ENCODE measurements at regions of chr11 and their contacts with region 1.

Region 1: DNA sequence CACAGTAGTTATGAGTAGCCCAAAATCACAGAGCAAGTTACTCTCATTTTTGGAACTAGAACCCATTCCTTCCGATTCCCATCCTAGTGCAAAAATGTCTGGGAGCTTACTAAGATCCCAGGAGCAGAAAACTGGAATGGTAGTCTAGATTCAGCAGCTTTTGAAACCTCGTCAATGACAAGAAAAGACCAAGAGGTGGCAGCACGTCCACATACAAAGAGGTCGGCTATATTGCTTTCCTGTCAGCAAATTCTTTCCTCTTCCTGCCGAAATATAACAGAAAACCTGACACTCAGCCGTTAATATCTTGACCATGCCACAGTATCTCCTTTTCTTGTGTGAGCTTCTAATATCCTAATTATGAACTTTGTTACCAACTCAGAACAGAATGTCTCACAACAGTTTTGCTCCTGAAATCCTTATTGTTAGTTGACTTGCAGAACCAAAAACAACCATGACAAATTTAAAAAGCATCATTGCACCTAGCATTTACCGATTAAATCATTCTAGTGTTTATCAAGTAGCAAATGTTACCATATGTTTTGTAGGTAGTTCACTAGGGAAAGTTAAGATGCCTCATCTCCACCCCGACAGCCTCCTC is 92.8 kb upstream of the OR9G4 start:
- DNase-seq: peak; percentile 82
- ATAC-seq: peak; percentile 65
- H3K4me3 ChIP-seq: no peak overlapping the region
- H3K27ac ChIP-seq: no peak overlapping the region
- H3K4me1 ChIP-seq: no peaks in the 10 kb centered on the region
- H3K27me3 ChIP-seq: peaks cover 33% of the 10 kb centered on the region
- CTCF ChIP-seq: peak; percentile 92

Region 2: DNA sequence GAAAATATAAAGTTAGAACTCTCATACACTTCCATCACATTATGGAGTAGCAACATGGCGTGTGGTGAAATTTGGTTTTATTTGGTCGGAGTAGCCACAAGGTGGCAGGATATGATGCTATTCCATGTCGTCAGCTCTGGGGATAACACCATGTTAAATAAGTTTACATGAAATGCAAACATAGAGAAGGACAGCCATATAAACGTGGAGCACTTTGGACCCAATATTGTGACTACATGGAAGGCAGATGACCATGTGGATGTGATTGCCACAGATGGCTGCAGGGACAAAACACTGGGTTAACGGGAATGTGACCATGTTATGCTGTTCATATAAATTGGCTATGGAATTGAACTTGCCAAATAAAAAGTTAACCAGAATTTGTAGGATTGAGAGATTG is 319.3 kb before region 1 on chr11:
- CTCF ChIA-PET with region 1: no interaction called
- POLR2A ChIA-PET with region 1: no interaction called
- intact Hi-C with region 1: no loop called
- DNase-seq: peak; percentile 43
- ATAC-seq: no peak
- H3K4me3 ChIP-seq: no peak overlapping the region
- H3K27ac ChIP-seq: no peak overlapping the region
- H3K4me1 ChIP-seq: no peaks in the 10 kb centered on the region
- H3K27me3 ChIP-seq: no peaks in the 10 kb centered on the region
- CTCF ChIP-seq: peak; percentile 49; the same call in 1 of the 2 replicates

Region 3: DNA sequence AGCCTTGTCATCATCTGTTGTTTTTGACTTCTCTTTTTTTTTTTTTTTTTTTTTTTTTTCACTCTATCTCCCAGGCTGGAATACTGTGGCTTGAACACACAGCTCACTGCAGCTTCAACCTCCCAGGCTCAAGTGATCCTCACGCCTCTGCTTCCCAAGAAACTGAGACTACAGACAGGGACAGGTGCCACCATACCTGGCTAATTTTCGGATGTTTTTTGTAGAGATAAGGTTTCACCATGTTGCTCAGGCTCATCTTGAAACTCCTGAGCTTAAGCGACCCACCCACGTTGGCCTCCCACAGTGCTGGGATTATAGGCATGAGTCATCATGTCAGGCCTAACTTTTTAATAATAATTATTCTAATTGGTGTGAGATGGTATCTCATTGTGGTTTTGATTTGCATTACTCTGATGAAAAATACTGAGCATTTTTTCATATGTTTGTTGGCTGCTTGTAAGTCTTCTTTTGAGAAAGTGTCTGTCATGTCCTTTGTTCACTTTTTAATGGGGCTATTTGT is 41.6 kb before region 1 on chr11:
- CTCF ChIA-PET with region 1: no interaction called
- POLR2A ChIA-PET with region 1: no interaction called
- intact Hi-C with region 1: no loop called
- DNase-seq: no peak
- ATAC-seq: no peak
- H3K4me3 ChIP-seq: no peak overlapping the region
- H3K27ac ChIP-seq: no peak overlapping the region
- H3K4me1 ChIP-seq: no peaks in the 10 kb centered on the region
- H3K27me3 ChIP-seq: no peaks in the 10 kb centered on the region
- CTCF ChIP-seq: no peak

Region 4: DNA sequence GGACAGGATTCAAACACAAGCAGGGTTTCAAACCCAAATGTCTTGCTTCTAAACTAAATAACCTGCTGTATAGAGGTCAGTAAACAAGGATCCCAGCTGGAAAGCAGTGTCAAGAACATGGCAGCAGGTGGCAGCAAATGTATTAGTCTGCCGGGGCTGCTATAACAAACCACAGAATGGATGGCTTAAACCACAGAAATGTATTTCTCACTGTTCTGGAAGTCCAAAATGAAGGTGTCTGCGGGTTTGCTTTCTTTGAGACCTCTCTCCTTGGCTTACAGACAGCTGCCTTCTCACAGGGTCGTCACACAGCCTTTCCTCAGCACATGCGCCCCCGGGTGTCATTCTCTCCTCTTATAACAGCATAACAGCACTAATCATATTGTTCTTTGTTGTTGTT is 275.3 kb after region 1 on chr11:
- CTCF ChIA-PET with region 1: no interaction called
- POLR2A ChIA-PET with region 1: no interaction called
- intact Hi-C with region 1: loop called (anchors 5 kb)
- DNase-seq: peak; percentile 69
- ATAC-seq: peak; percentile 83
- H3K4me3 ChIP-seq: no peak overlapping the region
- H3K27ac ChIP-seq: no peak overlapping the region
- H3K4me1 ChIP-seq: no peaks in the 10 kb centered on the region
- H3K27me3 ChIP-seq: peaks cover 20% of the 10 kb centered on the region
- CTCF ChIP-seq: peak; percentile 83

Region 5: DNA sequence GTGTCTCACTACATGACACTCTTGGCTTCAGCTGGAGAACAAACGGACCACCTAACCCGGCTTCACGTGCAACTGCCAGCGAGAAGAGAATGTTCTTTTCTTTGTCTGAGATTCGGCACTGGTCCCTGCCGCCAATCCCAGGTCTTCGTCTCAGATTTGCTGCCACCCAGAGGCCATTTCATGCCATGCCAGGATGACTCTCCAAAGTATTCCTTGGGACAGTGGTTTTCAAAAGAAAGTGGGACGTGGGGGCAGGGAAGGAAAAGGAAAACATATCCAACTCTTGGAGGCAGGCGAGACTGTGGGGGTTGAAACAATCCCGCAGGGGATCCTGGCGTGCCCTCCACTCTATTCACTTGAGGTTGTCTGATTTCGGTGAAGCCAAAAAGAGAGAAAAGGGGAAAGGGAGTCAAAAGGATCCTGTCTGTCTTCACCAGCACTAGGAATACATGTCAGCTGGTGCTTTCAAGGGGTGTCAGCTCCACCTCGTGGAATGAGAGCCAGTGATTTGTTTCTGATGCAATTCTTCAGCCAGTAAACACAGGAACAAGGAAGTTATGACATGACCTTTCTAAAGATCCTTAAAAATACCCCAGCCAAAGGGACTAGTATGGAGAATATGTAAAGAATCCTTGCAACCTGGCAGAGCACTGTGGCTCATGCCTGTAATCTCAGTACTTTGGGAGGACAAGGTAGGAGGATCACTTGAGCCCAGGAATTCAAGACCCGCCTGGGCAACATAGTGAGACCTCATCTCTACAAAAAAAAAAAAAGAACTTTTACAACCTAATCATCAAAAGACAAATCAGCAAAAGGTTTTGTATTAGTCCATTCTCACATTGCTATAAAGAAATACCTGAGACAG is 436.8 kb after region 1 on chr11:
- CTCF ChIA-PET with region 1: no interaction called
- POLR2A ChIA-PET with region 1: no interaction called
- intact Hi-C with region 1: loop called (anchors 1 kb)
- DNase-seq: peak; percentile 89
- ATAC-seq: peak; percentile 96
- H3K4me3 ChIP-seq: peak overlapping the region; percentile 51
- H3K27ac ChIP-seq: no peak overlapping the region
- H3K4me1 ChIP-seq: peaks cover 20% of the 10 kb centered on the region
- H3K27me3 ChIP-seq: no peaks in the 10 kb centered on the region
- CTCF ChIP-seq: peak; percentile 96